AG04449 (cell line): ENCODE measurements at regions of chr17 and their contacts with region 1.

Region 1: DNA sequence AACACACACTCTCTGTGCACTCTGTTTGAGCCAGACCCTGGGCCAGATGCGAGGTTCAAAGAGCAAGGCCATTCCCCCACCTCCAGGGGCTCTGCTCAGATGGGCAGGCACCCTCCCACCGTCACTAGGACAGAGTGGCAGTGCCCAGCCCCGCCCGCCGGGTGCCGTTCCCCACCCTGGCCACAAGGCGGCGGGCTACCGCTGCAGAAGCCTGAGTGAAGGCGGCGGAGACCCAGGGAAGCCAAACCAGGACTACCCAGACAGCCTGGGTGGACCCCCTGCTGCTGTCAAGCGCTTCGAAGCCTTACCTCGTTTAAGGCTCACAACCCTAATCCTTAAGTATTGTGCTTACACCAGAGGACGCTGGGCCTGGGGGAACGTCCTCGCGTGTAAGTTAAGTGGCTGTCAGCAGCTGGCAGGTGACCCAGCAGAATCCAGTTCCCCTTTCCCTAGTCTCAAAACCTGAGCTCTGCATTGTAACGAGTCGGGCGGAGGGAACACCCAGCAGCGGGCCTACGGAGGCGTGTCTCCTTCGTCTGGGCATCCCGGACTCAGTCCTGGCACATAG is 4.5 kb downstream of the ARHGAP27 start:
- DNase-seq: no peak
- H3K4me3 ChIP-seq: no peak overlapping the region
- CTCF ChIP-seq: peak; percentile 99

Region 2: GRCh38 chr17:44556832-44557606 is 871.1 kb before region 1 on chr17 and contains the start of gene FZD2:
- CTCF ChIA-PET with region 1: no interaction called
- POLR2A ChIA-PET with region 1: no interaction called
- DNase-seq: peak; percentile 94
- H3K4me3 ChIP-seq: peak within 1 kb of the TSS; percentile 90
- CTCF ChIP-seq: no peak

Region 3: DNA sequence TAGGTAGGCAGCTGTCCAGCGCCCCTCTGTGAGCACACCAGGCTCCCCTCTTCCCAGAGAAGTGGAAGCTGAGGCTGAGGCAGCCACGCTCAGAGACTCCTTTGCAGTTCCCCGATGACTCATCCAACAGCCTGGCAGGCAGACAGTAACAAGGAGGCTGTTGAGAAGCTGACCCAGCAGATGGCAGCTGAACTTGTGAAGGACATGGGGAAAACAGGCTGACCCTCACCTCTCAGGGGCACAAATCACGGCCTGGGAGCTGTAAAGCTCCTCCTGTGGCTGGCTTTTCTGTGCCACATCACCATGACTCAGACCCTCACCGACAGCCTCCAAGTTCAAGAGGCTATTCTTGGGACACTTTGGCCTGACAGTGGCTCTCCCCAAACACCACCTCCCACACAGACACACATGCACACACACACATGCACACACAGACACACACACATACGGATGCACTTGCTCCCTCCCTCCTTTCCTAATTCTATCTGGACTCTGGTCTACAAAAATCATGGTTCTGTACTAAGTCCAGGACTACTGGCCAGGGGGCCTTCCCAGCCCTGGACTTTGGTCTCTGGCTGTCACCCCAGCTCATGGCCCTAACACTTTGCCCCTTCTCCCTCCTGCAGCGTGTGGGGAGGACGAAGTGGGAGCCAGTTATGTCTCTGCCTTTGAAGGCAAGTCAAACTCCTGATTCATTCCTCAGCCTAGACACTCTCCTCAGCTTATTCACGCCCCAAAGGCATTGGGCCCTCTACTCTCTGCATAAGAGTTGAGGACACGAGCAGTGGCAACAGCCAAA is 134.5 kb before region 1 on chr17:
- CTCF ChIA-PET with region 1: interaction called, 11 read pairs
- POLR2A ChIA-PET with region 1: no interaction called
- DNase-seq: no peak
- H3K4me3 ChIP-seq: no peak overlapping the region
- CTCF ChIP-seq: peak; percentile 30

Region 4: DNA sequence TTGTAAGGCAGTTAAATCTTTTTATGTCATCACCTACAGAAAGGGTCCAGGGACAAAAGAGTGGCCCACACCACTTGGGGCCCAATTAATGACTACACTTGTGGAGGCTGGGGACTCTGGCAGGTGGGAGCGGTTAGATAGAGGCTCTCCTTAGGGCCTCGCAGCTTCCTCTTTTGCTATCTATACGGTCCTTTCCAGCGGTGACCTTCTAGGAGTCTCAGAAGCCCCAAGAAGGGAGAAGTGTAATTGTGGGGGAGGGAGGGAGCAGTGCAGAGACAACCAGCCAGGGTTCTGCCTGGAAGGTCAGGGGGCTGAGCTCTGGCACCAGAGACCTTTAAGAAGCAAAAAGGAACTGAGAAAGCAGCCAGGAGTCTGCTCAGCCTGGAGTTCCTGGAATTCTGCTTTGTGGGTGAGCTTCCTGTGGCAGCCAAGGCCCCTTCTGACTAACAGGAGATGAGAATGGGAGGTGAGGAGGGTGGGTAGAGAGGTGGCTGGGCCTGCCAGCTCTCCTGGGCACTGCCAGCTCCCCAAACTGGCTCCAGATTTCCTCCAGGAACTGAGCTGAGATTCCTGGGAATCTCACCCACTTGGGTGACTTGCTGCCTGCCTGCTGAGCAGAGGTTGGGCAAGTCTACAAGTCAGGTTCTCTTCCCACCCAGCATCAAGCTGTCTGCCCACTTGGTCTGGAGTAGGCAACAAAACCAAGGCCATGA is 95.0 kb before region 1 on chr17:
- CTCF ChIA-PET with region 1: no interaction called
- POLR2A ChIA-PET with region 1: no interaction called
- DNase-seq: no peak
- H3K4me3 ChIP-seq: no peak overlapping the region
- CTCF ChIP-seq: no peak

Region 5: GRCh38 chr17:45394913-45395568 is 33.1 kb before region 1 on chr17:
- CTCF ChIA-PET with region 1: interaction called, 50 read pairs
- POLR2A ChIA-PET with region 1: no interaction called
- DNase-seq: no peak
- H3K4me3 ChIP-seq: peak overlapping the region; percentile 51
- CTCF ChIP-seq: peak; percentile 81

Region 6: DNA sequence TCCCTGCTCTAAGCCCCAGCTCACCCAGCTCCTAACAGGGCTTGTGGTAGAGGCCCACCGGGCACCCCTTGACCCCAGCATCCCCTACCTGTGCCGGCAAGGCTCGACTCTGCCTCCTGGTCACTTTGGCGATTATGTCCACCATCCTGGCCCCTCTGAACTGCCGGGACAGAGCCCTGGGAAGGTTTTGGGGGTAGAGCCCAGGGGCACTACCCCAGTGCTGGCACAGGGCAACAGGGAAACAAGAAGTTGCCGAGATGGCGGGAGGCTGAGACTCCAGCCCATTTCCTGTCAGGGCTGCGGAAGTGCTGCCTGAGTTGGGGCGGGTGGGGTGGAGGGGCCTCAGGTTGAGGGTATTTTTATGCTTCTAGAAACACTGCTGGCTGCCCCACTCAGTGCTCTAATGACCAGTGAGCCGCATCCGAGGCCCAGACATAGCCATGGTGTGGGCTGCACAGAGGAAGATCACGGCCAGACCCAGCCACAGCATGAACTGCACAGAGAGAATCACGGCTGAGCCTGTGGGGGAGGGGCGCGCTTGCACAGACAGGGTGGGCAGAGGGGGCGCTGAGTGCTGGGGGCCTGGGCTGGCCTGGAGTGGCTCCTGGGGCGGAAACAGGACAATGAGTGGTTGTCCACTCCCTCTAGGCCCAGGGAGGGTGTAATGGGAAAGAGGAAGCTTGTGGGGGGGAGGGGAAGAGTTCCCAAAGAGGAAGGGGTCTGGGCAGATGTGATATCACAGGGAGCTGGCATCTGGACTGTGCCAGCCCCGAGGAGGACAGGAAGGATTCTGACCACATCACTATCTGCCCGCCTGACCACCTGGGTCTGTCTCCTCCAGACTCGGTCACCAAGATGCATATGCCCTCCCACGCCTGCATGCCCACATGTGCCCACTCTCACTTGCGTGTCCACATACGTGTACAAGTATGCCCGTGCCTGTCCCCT is 17.7 kb before region 1 on chr17:
- CTCF ChIA-PET with region 1: interaction called, 55 read pairs
- POLR2A ChIA-PET with region 1: no interaction called
- DNase-seq: no peak
- H3K4me3 ChIP-seq: no peak overlapping the region
- CTCF ChIP-seq: no peak

Region 7: GRCh38 chr17:45440155-45440778 is 12.1 kb after region 1 on chr17:
- CTCF ChIA-PET with region 1: interaction called, 15 read pairs
- POLR2A ChIA-PET with region 1: no interaction called
- DNase-seq: no peak
- H3K4me3 ChIP-seq: no peak overlapping the region
- CTCF ChIP-seq: no peak